Right ventricle myocardium inferior (tissue), 1 donor: ENCODE measurements at regions of chr19 and their contacts with region 1.

Region 1: DNA sequence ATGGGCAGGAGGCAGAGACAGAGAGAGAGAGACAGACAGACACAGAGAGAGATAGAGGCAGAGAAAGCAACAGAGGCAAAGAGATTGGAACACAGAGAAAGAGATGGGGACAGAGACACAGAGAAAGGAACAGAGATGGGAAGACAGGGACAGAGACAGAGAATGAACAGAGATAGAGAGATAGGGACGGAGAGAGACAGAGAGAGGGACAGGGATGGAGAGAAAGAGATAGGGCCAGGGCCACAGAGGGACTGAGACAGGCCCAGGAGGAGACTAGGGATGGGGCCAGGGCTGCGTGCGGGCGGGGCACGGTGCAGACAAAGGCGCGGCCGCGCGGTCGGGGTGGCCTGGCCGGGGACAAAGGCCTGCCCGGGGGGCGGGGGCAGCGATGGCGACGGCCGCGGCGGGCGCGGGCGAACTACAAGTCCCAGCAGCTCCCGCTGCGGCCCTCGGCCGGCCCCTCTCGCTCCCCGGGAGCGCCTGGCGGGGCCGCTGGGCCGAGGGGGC is at the start of gene ZNF358:
- DNase-seq: peak; percentile 89
- ATAC-seq: peak; percentile 85
- total RNA-seq, gene ZNF358: 89.6 TPM

Region 2: DNA sequence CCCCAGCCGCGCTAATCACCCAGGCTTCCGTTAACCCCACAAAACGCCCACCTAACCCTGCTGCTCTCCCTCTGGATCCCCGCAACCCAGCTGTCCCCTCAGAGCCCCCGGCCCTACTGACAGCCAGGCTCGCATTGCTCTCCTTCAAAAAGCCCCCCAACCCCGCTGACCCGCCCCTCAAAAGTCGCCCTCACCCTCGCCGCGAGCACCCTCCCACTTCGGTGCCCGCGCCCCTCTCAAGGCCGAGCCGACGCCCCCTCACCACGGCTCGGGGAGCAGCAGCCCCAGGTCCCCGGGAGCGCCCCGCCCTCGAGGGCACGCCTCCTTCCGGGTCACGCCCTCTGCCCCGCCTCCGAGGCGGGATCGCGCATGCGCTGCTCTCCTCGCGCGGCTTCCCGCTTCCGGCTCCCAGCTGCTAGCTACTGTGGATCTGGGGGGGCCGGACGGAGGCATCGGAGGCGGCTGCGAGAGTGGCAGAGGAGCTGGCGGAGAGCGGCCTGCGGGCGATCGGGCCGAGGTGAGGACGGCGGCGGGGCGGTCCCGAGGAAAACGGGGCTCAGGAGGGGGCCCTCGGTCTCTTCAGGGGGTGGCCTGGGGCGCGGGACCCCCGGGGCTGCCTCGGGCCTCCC is 120.9 kb before region 1 on chr19:
- intact Hi-C with region 1: loop called (anchors 5 kb)
- DNase-seq: peak; percentile 92
- ATAC-seq: peak; percentile 99

Region 3: DNA sequence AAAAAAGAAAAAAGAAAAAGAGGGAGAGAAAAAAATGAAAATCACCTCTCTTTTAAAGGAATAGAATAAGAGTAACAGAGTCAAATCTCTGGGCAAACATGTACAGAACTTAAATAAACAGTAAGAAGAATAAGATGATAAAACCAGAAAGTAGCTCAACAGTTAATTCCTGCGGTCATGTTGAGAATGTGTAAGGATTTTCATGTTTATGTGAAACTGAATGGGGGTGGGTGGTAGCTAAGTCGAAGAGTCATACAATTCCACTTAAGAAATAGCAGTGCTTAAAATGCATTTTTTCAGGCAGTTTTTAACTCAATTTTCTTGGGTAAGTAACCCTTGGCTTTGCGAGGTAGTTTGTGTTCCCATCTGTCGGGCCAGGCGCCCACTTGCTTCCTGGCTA is 87.8 kb before region 1 on chr19:
- intact Hi-C with region 1: no loop called
- DNase-seq: no peak
- ATAC-seq: no peak